IMR-90 (cell line): ENCODE measurements at regions of chr20 and their contacts with region 1.

Region 1: DNA sequence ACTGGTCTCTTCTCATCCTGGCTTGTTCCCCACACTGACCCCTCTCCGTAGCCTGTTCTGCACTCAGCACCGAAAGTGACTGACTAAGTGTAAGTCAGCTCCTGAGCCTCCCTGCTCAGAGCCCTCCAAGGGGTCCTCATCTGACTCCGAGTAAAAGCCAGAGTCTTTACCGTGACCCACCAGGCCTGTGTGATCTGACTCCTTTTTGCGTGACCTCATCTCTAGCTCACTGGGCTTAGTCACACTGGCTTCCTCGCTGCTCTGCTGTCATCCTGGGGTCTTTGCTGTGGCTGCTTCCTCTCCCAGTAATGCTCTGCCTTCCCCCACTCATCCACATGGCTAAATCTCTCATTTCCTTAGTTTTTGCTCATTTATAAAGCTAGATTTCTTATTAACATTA is 116.6 kb downstream of the PLCB4 start:
- DNase-seq: peak; percentile 89
- ATAC-seq: peak; percentile 97
- H3K4me3 ChIP-seq: no peak overlapping the region
- H3K27ac ChIP-seq: peak overlapping the region; percentile 27
- H3K4me1 ChIP-seq: peaks cover 10% of the 10 kb centered on the region
- H3K27me3 ChIP-seq: no peaks in the 10 kb centered on the region
- CTCF ChIP-seq: no peak
- POLR2A ChIP-seq: no peak
- RAD21 ChIP-seq: peak; percentile 17; the same call in 1 of the 2 replicates

Region 2: DNA sequence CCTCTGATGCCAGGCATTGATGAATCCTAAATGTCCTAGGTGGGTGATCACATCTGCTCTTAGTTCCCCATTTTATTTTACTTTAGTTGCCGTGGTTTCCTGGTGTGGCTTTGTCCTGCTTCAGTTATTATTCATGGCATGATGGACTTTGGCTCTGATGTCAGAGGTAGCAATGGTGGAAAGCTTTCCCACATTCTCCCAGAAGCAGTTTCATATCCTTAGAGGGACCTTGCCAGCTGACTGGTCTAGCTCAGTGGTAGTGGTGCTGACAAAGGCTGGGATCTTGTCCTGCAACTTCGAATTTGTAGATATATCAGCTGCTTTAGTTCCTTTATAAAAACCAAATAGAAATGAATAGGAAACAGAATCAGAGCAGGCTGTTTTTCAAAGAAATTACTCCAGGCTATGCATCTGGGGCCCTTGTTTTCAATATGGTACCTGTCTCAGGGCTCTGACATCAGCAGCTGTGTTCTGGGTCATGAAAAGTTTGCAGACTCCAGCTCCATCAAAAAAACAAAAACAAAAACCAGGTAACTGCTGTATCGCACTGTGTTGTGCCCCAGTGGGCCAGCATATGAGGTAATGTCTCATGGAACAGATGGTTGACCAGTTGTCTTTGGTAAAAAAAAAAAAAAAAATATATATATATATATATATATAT is 17.0 kb after region 1 on chr20:
- CTCF ChIA-PET with region 1: no interaction called
- POLR2A ChIA-PET with region 1: interaction called, 14 read pairs
- dilution Hi-C with region 1: no loop called
- in situ Hi-C with region 1: no loop called
- intact Hi-C with region 1: no loop called
- DNase-seq: no peak
- ATAC-seq: no peak
- H3K4me3 ChIP-seq: no peak overlapping the region
- H3K27ac ChIP-seq: no peak overlapping the region
- H3K4me1 ChIP-seq: peaks cover 18% of the 10 kb centered on the region
- H3K27me3 ChIP-seq: no peaks in the 10 kb centered on the region
- CTCF ChIP-seq: no peak
- POLR2A ChIP-seq: no peak
- RAD21 ChIP-seq: no peak

Region 3: GRCh38 chr20:9474835-9475415 is 289.4 kb after region 1 on chr20:
- CTCF ChIA-PET with region 1: no interaction called
- POLR2A ChIA-PET with region 1: no interaction called
- dilution Hi-C with region 1: no loop called
- in situ Hi-C with region 1: no loop called
- intact Hi-C with region 1: no loop called
- DNase-seq: peak; percentile 53
- ATAC-seq: peak; percentile 75
- H3K4me3 ChIP-seq: no peak overlapping the region
- H3K27ac ChIP-seq: no peak overlapping the region
- H3K4me1 ChIP-seq: no peaks in the 10 kb centered on the region
- H3K27me3 ChIP-seq: no peaks in the 10 kb centered on the region
- CTCF ChIP-seq: no peak
- POLR2A ChIP-seq: no peak
- RAD21 ChIP-seq: no peak

Region 4: GRCh38 chr20:9838378-9839295 is 653.1 kb after region 1 on chr20 and contains the start of gene PAK5:
- CTCF ChIA-PET with region 1: no interaction called
- POLR2A ChIA-PET with region 1: no interaction called
- dilution Hi-C with region 1: no loop called
- in situ Hi-C with region 1: no loop called
- intact Hi-C with region 1: no loop called
- DNase-seq: peak; percentile 15
- ATAC-seq: peak; percentile 85
- H3K4me3 ChIP-seq: peak within 1 kb of the TSS; percentile 40
- H3K27ac ChIP-seq: no peak within 1 kb of the TSS
- H3K4me1 ChIP-seq: no peaks in the 10 kb centered on the region
- H3K27me3 ChIP-seq: peaks cover 13% of the 10 kb centered on the region
- CTCF ChIP-seq: no peak
- POLR2A ChIP-seq: no peak
- RAD21 ChIP-seq: no peak
- total RNA-seq, gene PAK5: not detected in 2 replicates